Tibial artery (tissue), 4 donors: ENCODE measurements at regions of chr1 and their contacts with region 1.

Region 1: GRCh38 chr1:63367215-63368103 is at the start of gene ALG6:
- DNase-seq: peak; percentile 91 to 97
- H3K4me3 ChIP-seq: peak within 1 kb of the TSS; percentile 75 to 94
- H3K27ac ChIP-seq: peak within 1 kb of the TSS; percentile 82 to 84
- H3K4me1 ChIP-seq: peaks cover 0 to 13% (median 4%) of the 10 kb centered on the region in 4 donors
- H3K27me3 ChIP-seq: no peaks in the 10 kb centered on the region
- CTCF ChIP-seq: peak in 1 of 2 experiments; percentile 7

Region 2: DNA sequence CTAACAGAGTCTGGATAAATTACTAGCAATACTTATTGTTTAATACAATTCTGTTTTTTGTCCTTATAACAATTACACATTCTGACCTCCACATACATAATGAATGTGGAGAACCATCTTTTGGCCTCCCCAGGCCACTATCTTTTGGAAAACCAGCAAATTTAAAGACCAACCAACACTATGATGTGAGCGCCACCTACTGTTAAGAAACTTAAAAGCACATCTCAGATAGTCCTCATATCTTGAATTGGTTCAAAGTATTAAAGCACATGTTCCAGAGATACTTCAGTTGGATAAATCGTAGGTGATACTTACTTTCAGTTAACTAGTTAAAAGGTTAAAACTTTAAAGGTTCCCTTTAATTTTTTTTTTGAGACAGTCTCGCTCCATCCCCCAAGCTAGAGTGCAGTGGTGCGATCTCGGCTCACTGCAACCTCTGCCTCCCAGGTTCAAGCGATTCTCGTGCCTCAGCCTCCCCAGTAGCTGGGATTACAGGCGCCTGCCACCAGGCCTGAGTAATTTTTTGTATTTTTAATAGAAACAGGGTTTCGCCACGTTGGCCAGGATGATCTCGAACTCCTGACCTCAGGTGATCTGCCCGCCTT is 960.0 kb before region 1 on chr1:
- intact Hi-C with region 1: no loop called
- DNase-seq: no peak
- H3K4me3 ChIP-seq: no peak overlapping the region
- H3K27ac ChIP-seq: no peak overlapping the region
- H3K4me1 ChIP-seq: no peaks in the 10 kb centered on the region
- H3K27me3 ChIP-seq: peaks cover 0 to 3% of the 10 kb centered on the region in 2 donors
- CTCF ChIP-seq: peak; percentile 60 to 61

Region 3: DNA sequence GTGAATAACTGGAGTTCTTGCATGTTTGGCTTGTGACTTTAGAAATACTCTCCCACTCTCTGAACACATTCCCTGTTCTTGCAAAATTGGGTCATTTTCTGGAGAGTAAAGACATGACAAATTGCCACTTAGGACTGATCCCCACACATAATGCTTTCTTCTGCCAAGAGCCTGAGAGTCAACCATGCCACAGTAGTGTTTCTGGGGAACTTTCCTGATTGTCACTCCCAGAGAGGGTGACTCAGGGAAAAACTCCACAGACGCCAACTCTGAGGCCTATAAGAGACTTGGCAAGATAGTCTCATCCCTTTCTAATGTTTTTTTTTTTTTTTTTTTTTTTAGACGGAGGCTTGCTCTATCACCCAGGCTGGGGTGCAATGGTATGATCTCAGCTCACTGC is 425.7 kb before region 1 on chr1:
- intact Hi-C with region 1: no loop called
- DNase-seq: no peak
- H3K4me3 ChIP-seq: no peak overlapping the region
- H3K27ac ChIP-seq: no peak overlapping the region
- H3K4me1 ChIP-seq: no peaks in the 10 kb centered on the region
- H3K27me3 ChIP-seq: no peaks in the 10 kb centered on the region
- CTCF ChIP-seq: no peak

Region 4: DNA sequence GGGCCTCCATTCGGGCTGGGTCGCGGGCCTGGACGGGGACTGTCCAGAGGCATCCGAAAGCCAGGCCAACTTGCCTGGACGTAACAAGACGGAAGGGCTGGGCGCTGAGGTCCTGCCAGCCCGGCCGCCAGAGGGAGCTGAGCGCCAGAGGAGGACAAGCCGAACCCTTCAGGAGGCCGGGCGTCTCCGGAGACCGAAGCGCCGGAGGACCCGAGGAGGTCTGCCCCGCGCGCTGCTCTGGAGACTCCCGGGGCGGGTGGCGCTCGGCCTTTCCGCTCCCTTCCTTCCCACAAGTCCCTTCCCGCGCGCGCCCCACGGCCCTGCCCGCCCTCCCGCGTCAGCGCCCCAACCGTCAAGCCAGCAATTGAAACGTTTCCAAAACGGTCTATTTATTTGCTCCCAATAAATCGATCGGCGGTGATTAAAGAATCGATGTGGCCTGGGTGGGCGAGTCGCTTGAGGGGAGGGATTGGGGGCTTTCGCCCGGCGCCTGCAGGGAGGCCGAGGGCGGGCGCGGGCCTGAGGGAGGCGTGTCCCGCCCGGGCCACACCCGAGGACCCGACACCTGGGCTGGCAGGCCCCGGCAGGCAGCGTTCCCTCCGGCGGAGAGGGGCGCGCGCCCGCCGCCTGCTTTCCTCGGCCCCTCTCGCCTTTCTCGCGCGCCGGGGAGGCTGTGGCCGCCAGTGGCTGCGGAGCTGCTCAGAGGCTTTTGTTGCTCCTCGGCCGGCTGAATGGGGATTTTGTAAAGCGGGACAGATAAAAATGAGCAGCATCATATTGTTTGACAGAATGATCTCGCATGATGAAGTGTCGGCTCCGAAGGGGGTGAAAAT is 50.3 kb before region 1 on chr1:
- intact Hi-C with region 1: no loop called
- DNase-seq: no peak
- H3K4me3 ChIP-seq: peak overlapping the region; percentile 27 to 35
- H3K27ac ChIP-seq: no peak overlapping the region
- H3K4me1 ChIP-seq: peaks cover 0 to 27% (median 18%) of the 10 kb centered on the region in 4 donors
- H3K27me3 ChIP-seq: peaks cover 10 to 76% of the 10 kb centered on the region in 2 donors
- CTCF ChIP-seq: peak in 1 of 2 experiments; percentile 16

Region 5: GRCh38 chr1:63516629-63517028 is 149.2 kb after region 1 on chr1:
- intact Hi-C with region 1: loop called (anchors 10 kb)
- DNase-seq: no peak
- H3K4me3 ChIP-seq: no peak overlapping the region
- H3K27ac ChIP-seq: no peak overlapping the region
- H3K4me1 ChIP-seq: no peaks in the 10 kb centered on the region
- H3K27me3 ChIP-seq: no peaks in the 10 kb centered on the region
- CTCF ChIP-seq: no peak